ENCODE measurements at regions of chr6 and their contacts with region 1.

Region 1: GRCh38 chr6:149628875-149629510 is 19.5 kb downstream of the KATNA1 start:
- DNase-seq: no peak
- ATAC-seq: peak; percentile 89
- H3K4me3 Mint-ChIP-seq: peak overlapping the region; percentile 50
- H3K27ac Mint-ChIP-seq: peak overlapping the region; percentile 90
- H3K4me1 Mint-ChIP-seq: peaks cover 21% of the 10 kb centered on the region
- H3K27me3 Mint-ChIP-seq: no peaks in the 10 kb centered on the region
- CTCF ChIP-seq: no peak

Region 2: GRCh38 chr6:149565527-149566409 is 63.2 kb before region 1 on chr6 and contains the start of gene GINM1:
- CTCF ChIA-PET with region 1: no interaction called
- POLR2A ChIA-PET with region 1: no interaction called
- intact Hi-C with region 1: loop called (anchors 2 kb)
- DNase-seq: peak; percentile 97
- ATAC-seq: peak; percentile 85
- H3K4me3 Mint-ChIP-seq: peak within 1 kb of the TSS; percentile 93
- H3K27ac Mint-ChIP-seq: peak within 1 kb of the TSS; percentile 92
- H3K4me1 Mint-ChIP-seq: peaks cover 22% of the 10 kb centered on the region
- H3K27me3 Mint-ChIP-seq: no peaks in the 10 kb centered on the region
- CTCF ChIP-seq: no peak
- total RNA-seq, gene GINM1: 15.4 and 18.0 TPM in 2 replicates

Region 3: GRCh38 chr6:149586149-149586548 is 42.8 kb before region 1 on chr6:
- CTCF ChIA-PET with region 1: no interaction called
- POLR2A ChIA-PET with region 1: no interaction called
- intact Hi-C with region 1: loop called (anchors 5 kb)
- DNase-seq: no peak
- ATAC-seq: no peak
- H3K4me3 Mint-ChIP-seq: no peak overlapping the region
- H3K27ac Mint-ChIP-seq: no peak overlapping the region
- H3K4me1 Mint-ChIP-seq: no peaks in the 10 kb centered on the region
- H3K27me3 Mint-ChIP-seq: no peaks in the 10 kb centered on the region
- CTCF ChIP-seq: no peak

Region 4: DNA sequence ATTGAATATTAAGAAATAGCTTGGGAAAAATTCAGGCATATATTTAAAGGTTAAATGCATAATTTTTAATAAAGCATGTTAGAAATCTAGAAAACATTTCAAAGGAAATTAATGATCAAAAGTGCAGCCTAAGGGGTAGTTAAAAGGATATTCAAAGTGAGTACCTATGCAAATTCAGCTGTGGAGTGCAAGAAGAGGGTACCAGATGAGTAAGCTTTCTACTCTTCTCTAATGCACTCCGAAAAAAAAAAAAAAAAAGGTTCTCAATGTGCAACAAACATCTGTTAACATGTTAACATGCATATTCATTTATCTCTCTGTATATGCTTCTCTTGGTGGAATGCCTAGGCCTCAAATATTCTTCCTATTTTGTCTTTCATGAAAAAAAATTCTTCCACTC is 51.5 kb after region 1 on chr6:
- CTCF ChIA-PET with region 1: no interaction called
- POLR2A ChIA-PET with region 1: no interaction called
- intact Hi-C with region 1: no loop called
- DNase-seq: no peak
- ATAC-seq: no peak
- H3K4me3 Mint-ChIP-seq: no peak overlapping the region
- H3K27ac Mint-ChIP-seq: no peak overlapping the region
- H3K4me1 Mint-ChIP-seq: peaks cover 7% of the 10 kb centered on the region
- H3K27me3 Mint-ChIP-seq: no peaks in the 10 kb centered on the region
- CTCF ChIP-seq: no peak

Measured in activated B cell treated with CpG ODN at 0.5 μM for 24 hours (primary cell).